Dorsolateral prefrontal cortex (tissue), 120 donors: ENCODE measurements at regions of chr1 and their contacts with region 1.

Region 1: DNA sequence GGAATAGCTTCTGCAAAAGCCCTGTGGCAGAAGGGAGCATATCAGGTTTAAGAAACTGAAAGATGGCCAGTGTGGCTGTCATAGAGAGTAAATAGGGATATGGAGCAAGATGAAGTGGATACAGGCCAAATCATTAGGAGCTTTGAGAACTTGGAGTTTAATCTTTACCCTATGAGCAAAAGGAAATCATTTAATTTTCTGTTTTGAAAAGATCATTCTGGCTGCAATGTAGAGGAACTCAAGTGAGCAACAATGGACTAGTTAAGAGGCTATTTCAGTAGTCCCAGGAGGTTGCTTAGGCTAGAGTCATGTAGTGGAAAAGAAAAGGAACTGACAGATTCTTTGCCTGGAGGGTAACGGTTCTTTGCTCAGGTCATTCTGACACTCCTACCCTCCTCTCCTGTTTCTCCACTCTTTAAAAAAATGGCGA is 47.3 kb downstream of the RAP1A start:
- DNase-seq: no peak
- H3K4me3 ChIP-seq: no peak overlapping the region
- H3K27ac ChIP-seq: peak overlapping the region in 1 of 59 donors; percentile 3
- H3K27me3 ChIP-seq: no peaks in the 10 kb centered on the region
- CTCF ChIP-seq: no peak

Region 2: GRCh38 chr1:111615870-111616715 is 50.8 kb before region 1 on chr1:
- intact Hi-C with region 1: no loop called
- DNase-seq: no peak
- H3K4me3 ChIP-seq: no peak overlapping the region
- H3K27ac ChIP-seq: no peak overlapping the region
- H3K27me3 ChIP-seq: no peaks in the 10 kb centered on the region
- CTCF ChIP-seq: no peak

Region 3: DNA sequence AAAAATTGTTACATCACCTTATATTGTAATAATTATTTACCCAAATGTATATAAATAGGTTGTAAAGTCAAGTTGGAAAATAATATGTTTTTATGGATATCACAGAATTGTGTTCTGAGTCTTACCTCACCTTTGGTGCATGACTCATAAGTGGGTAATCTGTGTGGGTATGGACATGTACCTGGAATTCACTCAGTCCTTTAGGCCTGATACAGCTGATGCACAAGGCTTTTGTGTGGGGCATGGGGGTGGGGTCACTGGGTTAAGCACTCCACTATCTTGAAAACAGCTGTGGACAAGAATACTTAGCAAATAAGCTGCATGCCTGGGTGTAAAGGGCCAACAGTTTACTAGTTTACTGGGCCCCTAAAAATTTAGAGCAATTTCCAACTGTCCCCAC is 37.9 kb after region 1 on chr1:
- intact Hi-C with region 1: loop called in 1 of 2 experiments (anchors 5 kb)
- DNase-seq: no peak
- H3K4me3 ChIP-seq: no peak overlapping the region
- H3K27ac ChIP-seq: no peak overlapping the region
- H3K27me3 ChIP-seq: no peaks in the 10 kb centered on the region
- CTCF ChIP-seq: no peak